ENCODE measurements at regions of chr3 and their contacts with region 1.

Region 1: DNA sequence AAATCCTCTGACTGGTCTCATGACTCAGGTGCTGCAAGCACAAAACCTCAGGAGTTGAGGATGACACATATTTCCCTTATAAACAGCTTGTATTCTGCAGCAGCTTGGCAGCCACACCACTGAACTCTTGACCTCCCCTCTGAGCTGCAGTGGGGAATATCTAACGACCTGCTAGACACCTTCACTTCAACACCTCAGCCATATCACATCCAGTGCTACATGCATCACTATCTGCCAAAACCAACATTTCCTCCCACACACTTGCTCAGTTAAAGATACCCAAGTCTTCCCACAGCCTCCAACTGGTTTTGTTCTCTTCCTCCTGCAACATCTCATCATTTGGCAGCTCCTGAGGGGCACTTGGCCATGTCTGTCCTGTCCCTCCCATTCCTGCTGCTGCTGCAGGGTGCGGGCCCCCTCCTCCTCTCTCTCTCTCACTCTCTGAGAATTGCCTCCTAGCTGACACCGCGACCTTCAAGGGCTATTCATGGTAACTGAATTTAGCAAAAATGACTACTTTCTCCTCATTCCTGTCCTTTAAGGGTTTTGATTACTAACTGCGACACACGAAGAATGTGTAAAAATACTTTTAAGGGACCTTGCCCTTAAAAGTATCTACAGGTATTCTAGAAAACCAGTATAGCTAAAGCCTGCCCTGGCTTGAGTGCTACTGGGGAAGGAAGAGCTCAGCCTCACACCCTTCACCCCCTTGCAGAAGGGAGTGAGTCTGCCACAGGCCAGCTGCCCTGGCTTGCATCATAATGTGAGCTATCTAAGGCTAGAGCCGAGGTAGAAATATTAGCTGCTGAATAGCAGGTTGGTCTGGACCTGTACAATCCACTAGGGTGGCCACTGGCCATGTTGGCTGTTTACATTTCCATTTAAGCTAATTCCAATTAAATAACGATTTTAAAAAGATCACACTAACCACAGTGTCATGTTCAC is 5.0 kb upstream of the CCR9 start:
- DNase-seq: peak; percentile 32 to 74
- ATAC-seq: peak; percentile 86 to 95 (median 92)
- H3K4me3 ChIP-seq: no peak overlapping the region
- H3K4me3 Mint-ChIP-seq: peak overlapping the region; percentile 45
- H3K27ac ChIP-seq: peak overlapping the region; percentile 0
- H3K27ac Mint-ChIP-seq: peak overlapping the region; percentile 70 to 79
- H3K4me1 ChIP-seq: peaks cover 25% of the 10 kb centered on the region
- H3K4me1 Mint-ChIP-seq: peaks cover 20 to 32% of the 10 kb centered on the region in 2 donors
- H3K27me3 ChIP-seq: peaks cover 13% of the 10 kb centered on the region
- H3K27me3 Mint-ChIP-seq: peaks cover 3 to 29% of the 10 kb centered on the region in 2 donors
- CTCF ChIP-seq: no peak

Region 2: GRCh38 chr3:45807681-45808540 is 73.4 kb before region 1 on chr3:
- intact Hi-C with region 1: no loop called
- DNase-seq: no peak
- ATAC-seq: no peak
- H3K4me3 ChIP-seq: no peak overlapping the region
- H3K4me3 Mint-ChIP-seq: no peak overlapping the region
- H3K27ac ChIP-seq: no peak overlapping the region
- H3K27ac Mint-ChIP-seq: no peak overlapping the region
- H3K4me1 ChIP-seq: no peaks in the 10 kb centered on the region
- H3K4me1 Mint-ChIP-seq: no peaks in the 10 kb centered on the region
- H3K27me3 ChIP-seq: no peaks in the 10 kb centered on the region
- H3K27me3 Mint-ChIP-seq: no peaks in the 10 kb centered on the region
- CTCF ChIP-seq: no peak

Region 3: DNA sequence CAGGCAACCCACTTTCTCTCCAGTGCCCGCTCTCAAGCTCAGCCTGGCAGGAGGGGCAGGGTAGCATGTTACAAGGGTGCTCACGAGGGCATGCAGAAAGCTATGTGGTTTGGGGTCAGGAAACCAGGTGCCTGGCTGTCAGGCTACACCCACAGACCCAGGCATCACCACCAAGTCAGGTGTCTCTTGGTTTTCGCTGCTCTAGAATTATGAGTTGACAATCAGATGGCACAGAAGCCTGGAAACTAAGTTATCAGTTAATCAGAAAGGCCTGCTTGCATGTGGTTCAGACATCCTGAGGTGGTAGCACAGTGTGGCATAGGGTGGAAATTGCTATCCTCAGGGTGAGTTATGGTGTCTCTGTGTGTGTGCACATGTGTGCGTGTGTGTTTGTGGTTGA is 11.3 kb before region 1 on chr3:
- intact Hi-C with region 1: loop called (anchors 1 kb)
- DNase-seq: peak; percentile 35 to 89
- ATAC-seq: peak; percentile 81 to 93 (median 85)
- H3K4me3 ChIP-seq: no peak overlapping the region
- H3K4me3 Mint-ChIP-seq: peak overlapping the region; percentile 3
- H3K27ac ChIP-seq: no peak overlapping the region
- H3K27ac Mint-ChIP-seq: peak overlapping the region in 1 of 2 donors; percentile 72
- H3K4me1 ChIP-seq: peaks cover 30% of the 10 kb centered on the region
- H3K4me1 Mint-ChIP-seq: peaks cover 32 to 60% of the 10 kb centered on the region in 2 donors
- H3K27me3 ChIP-seq: peaks cover 15% of the 10 kb centered on the region
- H3K27me3 Mint-ChIP-seq: peaks cover 7 to 57% of the 10 kb centered on the region in 2 donors
- CTCF ChIP-seq: no peak

Region 4: GRCh38 chr3:45915518-45916231 is 34.3 kb after region 1 on chr3:
- intact Hi-C with region 1: loop called (anchors 1 kb)
- DNase-seq: peak; percentile 64 to 80
- ATAC-seq: peak; percentile 83 to 85 (median 85)
- H3K4me3 ChIP-seq: peak overlapping the region; percentile 4
- H3K4me3 Mint-ChIP-seq: peak overlapping the region; percentile 87
- H3K27ac ChIP-seq: peak overlapping the region; percentile 72
- H3K27ac Mint-ChIP-seq: peak overlapping the region; percentile 88 to 91
- H3K4me1 ChIP-seq: peaks cover 55% of the 10 kb centered on the region
- H3K4me1 Mint-ChIP-seq: peaks cover 42 to 69% of the 10 kb centered on the region in 2 donors
- H3K27me3 ChIP-seq: no peaks in the 10 kb centered on the region
- H3K27me3 Mint-ChIP-seq: no peaks in the 10 kb centered on the region
- CTCF ChIP-seq: no peak

Region 5: DNA sequence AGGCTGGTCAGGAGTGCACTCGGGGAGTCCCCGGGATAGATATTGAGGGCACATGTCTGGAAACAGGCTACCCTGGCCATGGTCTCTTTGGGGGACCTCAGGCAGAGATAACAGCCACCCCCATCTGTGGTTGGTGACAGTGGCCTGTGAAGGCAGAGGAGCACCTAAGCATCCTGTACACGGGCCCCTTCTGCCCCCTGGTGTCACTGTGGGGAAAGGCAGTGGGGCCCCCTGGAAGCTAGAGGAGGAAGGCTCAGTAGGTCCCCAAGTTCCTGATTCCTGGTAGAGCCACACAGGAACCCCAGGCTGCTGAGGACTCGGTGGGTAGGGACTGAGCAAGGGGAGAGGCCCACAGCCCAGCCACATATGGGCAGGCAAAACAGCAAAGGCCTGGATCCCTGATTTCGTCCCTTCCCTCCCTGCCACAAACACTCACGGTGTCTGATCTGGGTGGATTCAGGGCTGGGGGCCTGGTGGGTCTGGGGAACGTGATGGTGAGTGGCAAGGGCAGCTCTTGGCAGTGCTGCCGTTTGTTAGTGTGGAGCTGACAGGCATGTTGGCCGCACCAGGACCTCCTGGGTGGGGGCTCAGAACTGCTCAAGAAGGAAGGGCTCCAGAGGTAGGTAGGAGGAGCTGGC is 47.8 kb after region 1 on chr3:
- intact Hi-C with region 1: no loop called
- DNase-seq: peak; percentile 71 to 79
- ATAC-seq: peak; percentile 78 to 99 (median 99)
- H3K4me3 ChIP-seq: no peak overlapping the region
- H3K4me3 Mint-ChIP-seq: no peak overlapping the region
- H3K27ac ChIP-seq: no peak overlapping the region
- H3K27ac Mint-ChIP-seq: peak overlapping the region; percentile 46 to 89
- H3K4me1 ChIP-seq: peaks cover 7% of the 10 kb centered on the region
- H3K4me1 Mint-ChIP-seq: peaks cover 9 to 18% of the 10 kb centered on the region in 2 donors
- H3K27me3 ChIP-seq: no peaks in the 10 kb centered on the region
- H3K27me3 Mint-ChIP-seq: no peaks in the 10 kb centered on the region
- CTCF ChIP-seq: peak; percentile 85

Region 6: GRCh38 chr3:46449755-46450552 is 568.6 kb after region 1 on chr3:
- intact Hi-C with region 1: no loop called
- DNase-seq: peak in 1 of 2 donors; percentile 26
- ATAC-seq: no peak
- H3K4me3 ChIP-seq: no peak overlapping the region
- H3K4me3 Mint-ChIP-seq: no peak overlapping the region
- H3K27ac ChIP-seq: no peak overlapping the region
- H3K27ac Mint-ChIP-seq: no peak overlapping the region
- H3K4me1 ChIP-seq: no peaks in the 10 kb centered on the region
- H3K4me1 Mint-ChIP-seq: no peaks in the 10 kb centered on the region
- H3K27me3 ChIP-seq: no peaks in the 10 kb centered on the region
- H3K27me3 Mint-ChIP-seq: peaks cover 13 to 22% of the 10 kb centered on the region in 2 donors
- CTCF ChIP-seq: peak; percentile 45